H1 (cell line): ENCODE measurements at regions of chr6 and their contacts with region 1.

Region 1: GRCh38 chr6:34223956-34224940 is 12.4 kb upstream of the HMGA1 start:
- DNase-seq: peak in 1 of 2 experiments; percentile 95
- H3K4me3 ChIP-seq: peak overlapping the region; percentile 28 to 57 (median 36)
- H3K27ac ChIP-seq: peak overlapping the region; percentile 67
- H3K4me1 ChIP-seq: peaks cover 10 to 37% (median 30%) of the 10 kb centered on the region in 4 experiments
- H3K27me3 ChIP-seq: no peaks in the 10 kb centered on the region
- CTCF ChIP-seq: no peak
- EP300 ChIP-seq: no peak
- POLR2A ChIP-seq: peak in 1 of 2 experiments; percentile 65; a peak in 2 of 3 replicates
- RAD21 ChIP-seq: no peak

Region 2: GRCh38 chr6:34189806-34190503 is 34.3 kb before region 1 on chr6:
- CTCF ChIA-PET with region 1: interaction called, 24 read pairs
- POLR2A ChIA-PET with region 1: interaction called, 43 read pairs
- DNase-seq: no peak
- H3K4me3 ChIP-seq: no peak overlapping the region
- H3K27ac ChIP-seq: no peak overlapping the region
- H3K4me1 ChIP-seq: no peaks in the 10 kb centered on the region
- H3K27me3 ChIP-seq: no peaks in the 10 kb centered on the region; a peak in 2 of 7 replicates
- CTCF ChIP-seq: no peak
- EP300 ChIP-seq: no peak
- POLR2A ChIP-seq: no peak
- RAD21 ChIP-seq: no peak

Region 3: DNA sequence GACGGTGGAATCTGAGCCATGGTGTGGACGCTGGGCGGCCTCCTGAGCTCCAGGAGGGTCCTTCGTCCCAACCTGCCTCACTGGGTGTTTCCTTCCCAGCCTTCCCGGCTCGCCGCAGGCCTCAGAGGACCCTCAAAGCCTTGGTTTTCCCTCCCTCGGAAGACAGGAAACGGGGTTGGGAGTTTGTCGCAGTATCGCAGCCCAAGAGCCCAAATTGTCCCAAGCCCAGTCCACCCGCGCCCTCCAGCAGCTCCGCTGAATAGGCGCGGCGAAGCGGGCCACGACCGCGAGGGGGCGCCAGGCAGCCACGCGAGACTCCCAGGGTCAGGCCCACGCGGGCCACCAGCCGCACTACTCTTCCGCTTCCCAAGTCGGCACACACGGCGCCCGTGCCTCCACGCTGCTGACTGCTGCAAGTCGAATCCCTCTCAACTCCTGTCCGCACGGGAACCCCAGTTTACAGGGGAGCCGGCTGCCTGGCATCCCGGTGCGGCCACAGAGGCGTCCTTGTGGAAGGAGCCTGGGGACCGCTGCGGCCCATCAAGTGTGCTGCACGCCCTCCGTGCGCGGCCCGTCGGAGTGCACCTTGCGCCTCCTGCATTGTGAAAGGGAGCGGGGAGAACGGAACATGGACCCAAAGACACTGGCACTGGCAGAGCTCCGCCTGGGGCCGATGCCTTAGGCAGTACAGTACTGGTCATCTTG is 28.0 kb before region 1 on chr6:
- CTCF ChIA-PET with region 1: interaction called, 24 read pairs
- POLR2A ChIA-PET with region 1: interaction called, 79 read pairs
- DNase-seq: peak in 1 of 2 experiments; percentile 91
- H3K4me3 ChIP-seq: peak overlapping the region in 2 of 4 experiments; percentile 23 to 34; a peak in 4 of 8 replicates
- H3K27ac ChIP-seq: no peak overlapping the region
- H3K4me1 ChIP-seq: peaks cover 0 to 12% (median 5%) of the 10 kb centered on the region in 4 experiments; a peak in 5 of 7 replicates
- H3K27me3 ChIP-seq: peaks cover 0 to 13% (median 4%) of the 10 kb centered on the region in 4 experiments; a peak in 4 of 7 replicates
- CTCF ChIP-seq: peak; percentile 78 to 85 (median 79)
- EP300 ChIP-seq: peak in 1 of 2 experiments; percentile 28; a peak in 1 of 3 replicates
- POLR2A ChIP-seq: no peak
- RAD21 ChIP-seq: peak; percentile 74 to 76

Region 4: DNA sequence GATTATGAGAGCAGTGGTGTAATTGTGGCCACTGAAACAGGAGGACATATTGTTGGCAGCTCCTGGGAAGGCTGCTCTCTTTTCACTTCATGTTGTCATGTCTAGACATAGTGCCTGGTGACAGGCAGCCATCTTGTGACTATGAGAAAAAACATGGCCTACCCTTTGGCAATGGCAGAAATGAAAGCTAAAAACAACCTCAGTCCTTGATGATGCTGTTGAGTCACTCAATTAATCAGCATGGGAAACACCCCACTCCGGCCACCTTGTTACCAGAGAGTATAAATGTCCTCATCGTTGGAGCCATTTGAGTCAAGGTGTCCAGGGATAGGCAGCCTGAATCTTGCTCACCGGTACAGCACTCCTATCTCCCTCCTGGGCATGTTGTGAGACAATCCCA is 18.8 kb before region 1 on chr6:
- CTCF ChIA-PET with region 1: interaction called, 11 read pairs
- POLR2A ChIA-PET with region 1: interaction called, 79 read pairs
- DNase-seq: no peak
- H3K4me3 ChIP-seq: no peak overlapping the region
- H3K27ac ChIP-seq: no peak overlapping the region
- H3K4me1 ChIP-seq: peaks cover 2 to 9% (median 4%) of the 10 kb centered on the region in 4 experiments; a peak in 4 of 7 replicates
- H3K27me3 ChIP-seq: no peaks in the 10 kb centered on the region
- CTCF ChIP-seq: no peak
- EP300 ChIP-seq: no peak
- POLR2A ChIP-seq: no peak
- RAD21 ChIP-seq: no peak

Region 5: DNA sequence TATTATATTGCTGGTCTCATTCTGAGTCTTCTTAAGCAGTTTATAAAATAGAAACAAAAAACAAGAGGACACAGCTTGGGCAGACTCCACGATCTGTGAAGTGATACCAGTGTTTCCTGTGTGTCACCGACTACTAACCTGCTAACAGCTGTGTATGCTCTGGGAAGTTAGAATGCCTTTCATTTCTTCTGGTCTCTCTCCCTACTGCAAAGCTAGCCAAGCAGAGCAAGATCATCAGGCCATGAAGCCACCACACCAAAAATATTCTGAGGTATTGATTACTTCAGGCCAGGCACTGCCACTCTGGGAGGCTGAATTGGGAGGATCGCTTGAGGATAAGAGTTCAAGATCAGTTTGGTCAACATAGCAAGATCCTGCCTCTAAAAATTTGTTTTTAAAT is 71.5 kb after region 1 on chr6:
- CTCF ChIA-PET with region 1: no interaction called
- POLR2A ChIA-PET with region 1: no interaction called
- DNase-seq: no peak
- H3K4me3 ChIP-seq: no peak overlapping the region
- H3K27ac ChIP-seq: no peak overlapping the region
- H3K4me1 ChIP-seq: no peaks in the 10 kb centered on the region
- H3K27me3 ChIP-seq: no peaks in the 10 kb centered on the region
- CTCF ChIP-seq: no peak
- EP300 ChIP-seq: no peak
- POLR2A ChIP-seq: no peak
- RAD21 ChIP-seq: no peak